IMR-90 (cell line): ENCODE measurements at regions of chr11 and their contacts with region 1.

Region 1: DNA sequence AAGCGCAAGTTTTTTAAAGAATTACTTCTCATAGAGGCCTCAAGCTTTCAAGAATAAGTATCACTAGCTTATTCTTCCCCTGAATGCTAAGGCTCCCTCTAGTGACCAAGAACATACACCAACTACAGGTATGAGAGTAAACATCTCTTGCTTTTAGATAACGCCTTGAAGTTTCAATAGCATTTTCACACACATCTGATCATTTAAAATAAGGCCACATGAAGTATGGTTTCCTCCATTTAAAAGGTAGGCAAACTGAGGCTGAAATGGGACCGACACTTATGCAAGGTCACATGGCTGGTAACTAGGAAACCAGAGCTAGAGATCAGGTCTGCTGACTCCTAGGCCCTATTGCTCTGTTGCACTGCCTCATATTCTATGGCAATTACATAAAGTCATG is 66.5 kb downstream of the CCDC34 start:
- DNase-seq: peak; percentile 70
- ATAC-seq: peak; percentile 79
- H3K4me3 ChIP-seq: no peak overlapping the region
- H3K27ac ChIP-seq: no peak overlapping the region
- H3K4me1 ChIP-seq: peaks cover 4% of the 10 kb centered on the region; the same call in 1 of the 2 replicates
- H3K27me3 ChIP-seq: no peaks in the 10 kb centered on the region
- CTCF ChIP-seq: peak; percentile 73
- POLR2A ChIP-seq: no peak
- RAD21 ChIP-seq: peak; percentile 82

Region 2: GRCh38 chr11:27183672-27184457 is 112.6 kb before region 1 on chr11:
- CTCF ChIA-PET with region 1: interaction called, 19 read pairs
- POLR2A ChIA-PET with region 1: interaction called, 3 read pairs
- dilution Hi-C with region 1: no loop called
- in situ Hi-C with region 1: loop called (anchors 5 kb)
- intact Hi-C with region 1: loop called (anchors 1 kb)
- DNase-seq: peak; percentile 72
- ATAC-seq: peak; percentile 56; the same call in 1 of the 2 replicates
- H3K4me3 ChIP-seq: no peak overlapping the region
- H3K27ac ChIP-seq: no peak overlapping the region
- H3K4me1 ChIP-seq: no peaks in the 10 kb centered on the region; the same call in 1 of the 2 replicates
- H3K27me3 ChIP-seq: peaks cover 27% of the 10 kb centered on the region
- CTCF ChIP-seq: peak; percentile 92
- POLR2A ChIP-seq: no peak
- RAD21 ChIP-seq: peak; percentile 96

Region 3: GRCh38 chr11:27281740-27282590 is 14.5 kb before region 1 on chr11:
- CTCF ChIA-PET with region 1: interaction called, 14 read pairs
- POLR2A ChIA-PET with region 1: no interaction called
- dilution Hi-C with region 1: no loop called
- in situ Hi-C with region 1: no loop called
- intact Hi-C with region 1: no loop called
- DNase-seq: peak; percentile 90
- ATAC-seq: peak; percentile 99
- H3K4me3 ChIP-seq: no peak overlapping the region
- H3K27ac ChIP-seq: no peak overlapping the region
- H3K4me1 ChIP-seq: peaks cover 8% of the 10 kb centered on the region
- H3K27me3 ChIP-seq: peaks cover 15% of the 10 kb centered on the region
- CTCF ChIP-seq: no peak
- POLR2A ChIP-seq: no peak
- RAD21 ChIP-seq: no peak

Region 4: GRCh38 chr11:27313157-27313821 is 16.8 kb after region 1 on chr11:
- CTCF ChIA-PET with region 1: interaction called, 12 read pairs
- POLR2A ChIA-PET with region 1: no interaction called
- dilution Hi-C with region 1: no loop called
- in situ Hi-C with region 1: no loop called
- intact Hi-C with region 1: no loop called
- DNase-seq: no peak
- ATAC-seq: peak; percentile 37
- H3K4me3 ChIP-seq: no peak overlapping the region
- H3K27ac ChIP-seq: no peak overlapping the region
- H3K4me1 ChIP-seq: no peaks in the 10 kb centered on the region
- H3K27me3 ChIP-seq: no peaks in the 10 kb centered on the region
- CTCF ChIP-seq: no peak
- POLR2A ChIP-seq: no peak
- RAD21 ChIP-seq: no peak

Region 5: DNA sequence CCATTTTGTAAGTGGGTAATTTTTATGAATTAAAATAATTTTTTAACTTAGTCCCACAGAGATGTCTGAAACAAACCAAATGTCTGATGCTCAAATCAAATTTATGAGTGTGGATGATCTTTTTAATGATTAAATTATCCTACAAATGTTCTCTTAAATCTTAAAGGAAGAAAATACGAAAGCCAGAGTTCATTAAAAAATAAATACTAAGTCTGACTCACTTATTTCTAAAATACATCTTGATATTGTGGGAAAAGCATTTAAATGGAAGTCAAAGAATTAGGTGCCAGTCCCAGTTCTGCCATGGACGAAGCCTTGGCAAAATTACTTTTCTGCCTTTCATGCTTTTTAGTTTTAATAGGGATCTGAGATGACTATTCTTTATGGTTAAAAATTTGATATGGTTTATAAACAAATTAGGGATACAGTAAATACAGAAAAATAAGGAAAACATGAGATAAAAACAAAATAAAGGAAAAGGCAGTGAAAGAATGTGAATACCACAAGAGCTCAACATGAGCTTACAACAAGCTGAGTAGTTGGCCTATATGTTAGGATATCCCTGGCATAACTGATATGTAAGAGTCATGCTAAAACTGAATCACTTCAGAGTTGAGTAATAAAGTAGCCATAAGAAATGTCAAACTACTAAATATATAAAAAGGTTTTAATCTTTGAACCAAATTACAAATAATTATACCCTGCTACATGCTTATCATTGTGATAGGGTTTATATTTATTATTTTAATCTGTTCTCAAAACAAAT is 57.3 kb after region 1 on chr11:
- CTCF ChIA-PET with region 1: no interaction called
- POLR2A ChIA-PET with region 1: no interaction called
- dilution Hi-C with region 1: no loop called
- in situ Hi-C with region 1: no loop called
- intact Hi-C with region 1: no loop called
- DNase-seq: peak; percentile 80
- ATAC-seq: peak; percentile 93
- H3K4me3 ChIP-seq: no peak overlapping the region
- H3K27ac ChIP-seq: 0 out of 2 replicates have a peak overlapping the region, but pooled peaks have one; percentile 16
- H3K4me1 ChIP-seq: peaks cover 3% of the 10 kb centered on the region; the same call in 1 of the 2 replicates
- H3K27me3 ChIP-seq: no peaks in the 10 kb centered on the region
- CTCF ChIP-seq: no peak
- POLR2A ChIP-seq: no peak
- RAD21 ChIP-seq: no peak

Region 6: DNA sequence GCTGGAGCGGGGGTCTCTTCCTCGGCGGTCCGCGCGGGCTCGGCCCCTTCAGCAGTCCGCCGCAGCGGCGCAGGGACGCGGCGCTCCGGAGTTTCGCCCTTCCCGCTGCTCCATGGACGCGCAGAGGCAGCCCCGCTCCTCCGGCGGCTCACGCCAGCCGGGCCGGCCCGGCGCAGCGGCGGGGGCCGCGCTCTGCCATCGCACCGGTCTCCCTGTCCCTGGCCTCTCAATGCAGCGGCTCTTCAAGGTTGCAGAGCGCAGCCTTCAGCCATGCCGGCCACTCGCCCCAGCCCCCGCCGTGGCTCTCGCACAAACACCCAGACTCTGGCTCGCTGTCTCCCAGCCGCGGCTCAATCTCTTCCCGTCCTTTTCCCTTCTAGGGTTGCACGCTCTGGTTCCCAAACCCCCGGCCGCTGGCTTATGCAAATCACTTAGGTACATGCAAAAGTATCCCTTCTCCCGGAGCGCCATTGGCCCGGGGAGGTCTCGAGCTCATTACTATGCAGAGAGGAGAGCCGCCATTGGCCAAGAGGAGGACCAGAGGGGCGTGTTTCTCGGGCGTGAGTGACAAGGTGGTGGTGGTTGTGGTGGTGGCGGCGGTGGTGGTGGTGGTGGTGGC is 176.0 kb after region 1 on chr11 and contains the start of gene LGR4:
- CTCF ChIA-PET with region 1: no interaction called
- POLR2A ChIA-PET with region 1: no interaction called
- dilution Hi-C with region 1: no loop called
- in situ Hi-C with region 1: no loop called
- intact Hi-C with region 1: loop called (anchors 5 kb)
- DNase-seq: peak; percentile 90
- ATAC-seq: peak; percentile 95
- H3K4me3 ChIP-seq: peak within 1 kb of the TSS; percentile 53
- H3K27ac ChIP-seq: peak within 1 kb of the TSS; percentile 15; the same call in 1 of the 2 replicates
- H3K4me1 ChIP-seq: peaks cover 7% of the 10 kb centered on the region
- H3K27me3 ChIP-seq: no peaks in the 10 kb centered on the region
- CTCF ChIP-seq: no peak
- POLR2A ChIP-seq: no peak
- RAD21 ChIP-seq: no peak
- total RNA-seq, gene LGR4: 6.8 and 8.1 TPM in 2 replicates

Region 7: GRCh38 chr11:27485930-27486773 is 189.7 kb after region 1 on chr11:
- CTCF ChIA-PET with region 1: interaction called, 4 read pairs
- POLR2A ChIA-PET with region 1: interaction called, 5 read pairs
- dilution Hi-C with region 1: no loop called
- in situ Hi-C with region 1: no loop called
- intact Hi-C with region 1: loop called (anchors 2 kb)
- DNase-seq: peak; percentile 61
- ATAC-seq: peak; percentile 81; the same call in 1 of the 2 replicates
- H3K4me3 ChIP-seq: no peak overlapping the region
- H3K27ac ChIP-seq: no peak overlapping the region
- H3K4me1 ChIP-seq: no peaks in the 10 kb centered on the region
- H3K27me3 ChIP-seq: no peaks in the 10 kb centered on the region
- CTCF ChIP-seq: peak; percentile 99
- POLR2A ChIP-seq: peak; percentile 36; the same call in 1 of the 2 replicates
- RAD21 ChIP-seq: peak; percentile 98